ENCODE measurements at regions of chr7 and their contacts with region 1.

Region 1: GRCh38 chr7:9981742-9982349 is 991.8 kb upstream of the PHF14 start:
- DNase-seq: no peak
- H3K4me3 ChIP-seq: no peak overlapping the region
- H3K27ac ChIP-seq: no peak overlapping the region
- H3K4me1 ChIP-seq: no peaks in the 10 kb centered on the region
- H3K27me3 ChIP-seq: no peaks in the 10 kb centered on the region
- CTCF ChIP-seq: no peak
- POLR2A ChIP-seq: no peak

Region 2: GRCh38 chr7:9822458-9823290 is 159.2 kb before region 1 on chr7:
- intact Hi-C with region 1: no loop called
- DNase-seq: no peak
- H3K4me3 ChIP-seq: no peak overlapping the region
- H3K27ac ChIP-seq: no peak overlapping the region
- H3K4me1 ChIP-seq: no peaks in the 10 kb centered on the region
- H3K27me3 ChIP-seq: no peaks in the 10 kb centered on the region
- CTCF ChIP-seq: no peak
- POLR2A ChIP-seq: no peak

Region 3: DNA sequence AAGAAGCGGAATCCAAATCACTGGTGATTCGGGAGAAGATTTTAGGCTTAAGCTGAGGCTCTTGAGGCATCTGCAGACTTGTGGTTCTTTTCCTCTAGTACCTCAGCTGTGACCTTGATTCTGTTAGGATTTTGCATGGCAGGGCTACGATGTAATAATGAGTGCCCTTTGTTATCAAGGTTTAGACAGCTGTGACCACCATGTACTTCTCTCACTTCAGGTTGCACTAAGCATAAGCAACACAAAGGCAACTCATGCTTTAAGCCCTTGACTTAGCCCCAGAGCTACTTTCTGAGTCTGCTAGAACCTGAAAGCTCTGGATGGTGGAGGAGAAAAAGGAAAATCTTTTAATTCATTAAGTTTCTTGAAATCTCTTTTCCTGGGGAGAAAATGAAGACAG is 60.5 kb before region 1 on chr7:
- intact Hi-C with region 1: no loop called
- DNase-seq: no peak
- H3K4me3 ChIP-seq: no peak overlapping the region
- H3K27ac ChIP-seq: no peak overlapping the region
- H3K4me1 ChIP-seq: no peaks in the 10 kb centered on the region
- H3K27me3 ChIP-seq: no peaks in the 10 kb centered on the region
- CTCF ChIP-seq: no peak
- POLR2A ChIP-seq: no peak

Region 4: DNA sequence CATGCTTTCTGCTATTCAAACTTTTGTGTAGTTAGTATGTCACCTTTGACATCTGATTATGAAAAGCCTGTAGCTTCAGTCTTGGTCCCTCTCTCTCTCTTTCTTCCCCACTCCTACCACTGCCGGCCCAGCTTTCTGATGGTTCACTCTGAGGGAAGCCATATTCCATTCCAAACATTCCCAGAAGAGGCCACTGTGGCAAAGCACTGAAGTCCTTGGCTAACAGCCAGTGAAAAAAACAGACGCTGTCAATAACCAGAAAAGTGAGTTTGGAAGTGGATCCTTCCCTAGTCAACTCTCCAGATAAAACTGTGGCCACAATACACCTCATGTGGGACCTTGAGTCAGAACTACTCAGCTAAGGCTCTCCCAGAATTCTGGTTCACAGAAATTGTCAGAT is 41.1 kb after region 1 on chr7:
- intact Hi-C with region 1: loop called (anchors 10 kb)
- DNase-seq: no peak
- H3K4me3 ChIP-seq: no peak overlapping the region
- H3K27ac ChIP-seq: no peak overlapping the region
- H3K4me1 ChIP-seq: no peaks in the 10 kb centered on the region
- H3K27me3 ChIP-seq: no peaks in the 10 kb centered on the region
- CTCF ChIP-seq: peak in 1 of 3 donors; percentile 32
- POLR2A ChIP-seq: no peak

Region 5: DNA sequence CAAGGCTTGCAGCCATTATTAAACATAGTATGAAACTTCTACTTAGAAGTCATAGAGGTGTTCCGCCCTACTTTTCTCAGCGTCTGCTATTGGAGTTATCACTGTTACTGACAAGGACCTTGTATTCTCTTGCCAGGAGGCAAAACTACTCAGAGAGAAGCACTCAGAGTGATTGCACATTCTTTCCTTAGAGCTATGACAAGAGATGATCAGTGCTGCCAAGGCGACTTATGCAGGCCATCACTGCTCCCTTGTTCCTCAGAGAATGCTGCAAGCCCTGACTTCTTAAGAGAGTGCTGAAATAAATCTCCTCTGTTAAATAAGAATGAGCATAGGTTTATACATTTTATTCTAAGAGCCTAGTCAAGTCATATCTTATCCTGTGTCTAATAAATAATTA is 457.2 kb after region 1 on chr7:
- intact Hi-C with region 1: no loop called
- DNase-seq: no peak
- H3K4me3 ChIP-seq: no peak overlapping the region
- H3K27ac ChIP-seq: no peak overlapping the region
- H3K4me1 ChIP-seq: no peaks in the 10 kb centered on the region
- H3K27me3 ChIP-seq: no peaks in the 10 kb centered on the region
- CTCF ChIP-seq: no peak
- POLR2A ChIP-seq: no peak